PC-3 (cell line): ENCODE measurements at regions of chr17 and their contacts with region 1.

Region 1: GRCh38 chr17:61155590-61156243 is 243.9 kb upstream of the TBX2 start:
- DNase-seq: no peak
- ATAC-seq: no peak
- H3K4me3 ChIP-seq: no peak overlapping the region
- H3K27ac ChIP-seq: no peak overlapping the region
- H3K4me1 ChIP-seq: no peaks in the 10 kb centered on the region
- H3K27me3 ChIP-seq: no peaks in the 10 kb centered on the region
- CTCF ChIP-seq: no peak

Region 2: DNA sequence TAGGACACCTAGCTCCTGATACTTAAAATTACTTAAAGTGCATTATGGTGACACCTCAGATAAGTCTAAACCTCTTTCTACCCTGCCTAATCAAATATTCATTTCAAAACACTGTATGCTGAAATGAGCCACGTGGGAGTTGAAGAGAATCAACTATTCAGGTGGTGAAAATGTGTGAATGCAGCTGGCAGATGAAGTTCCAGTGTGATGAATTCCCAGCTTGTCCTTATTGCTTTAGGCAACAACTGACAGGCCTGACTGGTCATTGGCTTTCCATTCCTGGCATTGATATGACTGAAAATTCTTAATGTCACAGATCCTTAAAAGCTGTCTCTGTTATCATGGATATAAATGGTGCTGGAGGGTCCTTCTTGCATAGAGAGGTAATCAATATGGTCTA is 57.9 kb before region 1 on chr17:
- CTCF ChIA-PET with region 1: no interaction called
- POLR2A ChIA-PET with region 1: interaction called, 18 read pairs
- intact Hi-C with region 1: no loop called
- DNase-seq: no peak
- ATAC-seq: no peak
- H3K4me3 ChIP-seq: no peak overlapping the region
- H3K27ac ChIP-seq: no peak overlapping the region
- H3K4me1 ChIP-seq: no peaks in the 10 kb centered on the region
- H3K27me3 ChIP-seq: no peaks in the 10 kb centered on the region
- CTCF ChIP-seq: no peak

Region 3: GRCh38 chr17:61127960-61128359 is 27.8 kb before region 1 on chr17:
- CTCF ChIA-PET with region 1: interaction called, 10 read pairs
- POLR2A ChIA-PET with region 1: no interaction called
- intact Hi-C with region 1: no loop called
- DNase-seq: no peak
- ATAC-seq: no peak
- H3K4me3 ChIP-seq: no peak overlapping the region
- H3K27ac ChIP-seq: no peak overlapping the region
- H3K4me1 ChIP-seq: peaks cover 7% of the 10 kb centered on the region
- H3K27me3 ChIP-seq: no peaks in the 10 kb centered on the region
- CTCF ChIP-seq: no peak

Region 4: GRCh38 chr17:61399131-61400057 is 243.7 kb after region 1 on chr17 and contains the start of gene TBX2:
- CTCF ChIA-PET with region 1: no interaction called
- POLR2A ChIA-PET with region 1: no interaction called
- intact Hi-C with region 1: no loop called
- DNase-seq: peak; percentile 85
- ATAC-seq: peak; percentile 68
- H3K4me3 ChIP-seq: peak within 1 kb of the TSS; percentile 72
- H3K27ac ChIP-seq: no peak within 1 kb of the TSS
- H3K4me1 ChIP-seq: peaks cover 20% of the 10 kb centered on the region
- H3K27me3 ChIP-seq: no peaks in the 10 kb centered on the region
- CTCF ChIP-seq: 0 out of 2 replicates have a peak, but pooled peaks have one; percentile 12
- total RNA-seq, gene TBX2: 7.1 and 8.5 TPM in 2 replicates